ENCODE measurements at regions of chr1 and their contacts with region 1.

Region 1: DNA sequence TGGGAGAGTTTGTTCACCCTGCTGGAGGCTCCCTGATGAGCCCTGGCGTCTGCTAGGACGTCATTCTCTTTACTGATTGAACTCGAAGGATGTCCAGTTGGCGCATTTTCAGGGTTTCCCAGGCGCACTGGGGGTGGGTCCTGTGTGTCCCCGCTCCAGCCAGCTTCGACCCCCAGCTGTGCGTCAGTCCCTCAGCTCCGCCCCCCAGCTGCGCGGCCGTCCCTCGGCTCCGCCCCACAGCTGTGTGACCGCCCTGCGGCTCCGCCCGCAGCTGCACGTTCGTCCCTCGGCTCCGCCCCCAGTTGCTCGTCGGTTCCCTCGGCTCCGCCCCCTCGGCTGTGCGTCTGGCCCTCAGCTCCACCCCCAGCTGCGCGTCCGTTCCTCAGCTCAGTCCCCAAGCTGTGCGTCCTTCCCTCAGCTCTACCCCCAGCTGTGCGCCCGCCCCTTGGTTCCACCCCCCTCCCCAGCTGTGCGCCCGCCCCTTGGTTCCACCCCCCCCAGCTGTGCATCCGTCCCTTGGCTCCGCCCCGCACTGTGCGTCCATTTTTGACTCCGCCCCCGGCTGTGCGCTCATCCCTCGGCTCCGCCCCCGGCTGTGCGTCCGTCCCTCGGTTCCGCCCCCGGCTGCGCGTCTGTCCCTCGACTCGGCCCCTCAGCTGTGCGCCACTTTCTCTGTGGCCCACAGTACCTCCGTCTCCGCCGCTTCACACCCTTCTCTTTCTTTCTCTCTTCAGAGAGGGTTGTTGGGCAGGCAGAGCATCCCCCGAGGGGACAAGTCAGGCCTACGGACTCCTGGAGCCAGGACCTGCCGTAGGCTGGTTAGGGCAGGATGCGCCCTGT is 61.3 kb downstream of the FAAP20 start:
- DNase-seq: peak; percentile 95
- H3K4me3 Mint-ChIP-seq: peak overlapping the region; percentile 73
- H3K27ac Mint-ChIP-seq: peak overlapping the region; percentile 48
- H3K4me1 Mint-ChIP-seq: peaks cover 6% of the 10 kb centered on the region
- H3K27me3 Mint-ChIP-seq: peaks cover 8% of the 10 kb centered on the region

Region 2: GRCh38 chr1:1906185-1907097 is 226.8 kb before region 1 on chr1:
- intact Hi-C with region 1: loop called (anchors 1 kb)
- DNase-seq: peak; percentile 61
- H3K4me3 Mint-ChIP-seq: peak overlapping the region; percentile 68
- H3K27ac Mint-ChIP-seq: peak overlapping the region; percentile 76
- H3K4me1 Mint-ChIP-seq: peaks cover 16% of the 10 kb centered on the region
- H3K27me3 Mint-ChIP-seq: peaks cover 2% of the 10 kb centered on the region

Region 3: DNA sequence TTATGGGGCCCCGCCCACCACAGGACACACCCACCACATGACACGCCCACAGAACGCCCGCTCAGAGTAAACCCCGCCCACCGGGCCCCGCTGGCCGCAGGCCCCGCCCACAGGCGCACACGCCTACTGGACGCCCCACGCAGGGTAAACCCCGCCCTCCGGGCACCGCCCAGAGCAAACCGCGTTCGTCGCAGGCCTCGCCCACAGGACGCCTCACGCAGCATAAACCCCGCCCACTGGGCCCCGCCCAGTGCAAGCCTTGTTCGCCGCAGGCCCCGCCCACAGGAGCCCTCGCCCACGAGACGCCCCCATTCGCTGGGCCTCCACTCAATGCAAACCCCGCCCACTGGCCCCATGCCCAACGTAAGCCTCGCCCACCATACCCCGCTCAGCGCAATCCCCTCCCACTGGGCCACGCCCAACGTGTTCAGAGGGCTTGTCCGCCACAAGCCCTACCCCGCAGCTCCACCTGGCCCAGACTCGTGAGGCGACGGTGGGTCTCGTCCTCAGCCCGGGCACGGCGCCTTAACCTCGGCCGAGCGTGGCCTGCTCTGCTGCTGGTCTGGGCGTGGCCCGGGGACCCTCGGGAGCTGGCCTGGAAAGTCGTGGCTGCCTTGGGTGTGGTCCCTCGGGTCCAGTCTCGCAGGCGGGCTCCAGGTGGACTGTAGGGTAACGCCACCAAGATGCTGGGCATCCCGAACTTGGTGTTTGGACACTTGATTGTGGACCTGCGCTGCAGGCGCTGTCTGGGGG is 213.8 kb before region 1 on chr1:
- intact Hi-C with region 1: loop called (anchors 1 kb)
- DNase-seq: peak; percentile 99
- H3K4me3 Mint-ChIP-seq: peak overlapping the region; percentile 64
- H3K27ac Mint-ChIP-seq: peak overlapping the region; percentile 70
- H3K4me1 Mint-ChIP-seq: no peaks in the 10 kb centered on the region
- H3K27me3 Mint-ChIP-seq: peaks cover 2% of the 10 kb centered on the region

Region 4: GRCh38 chr1:2148691-2149090 is 15.4 kb after region 1 on chr1:
- intact Hi-C with region 1: no loop called
- DNase-seq: peak; percentile 51
- H3K4me3 Mint-ChIP-seq: no peak overlapping the region
- H3K27ac Mint-ChIP-seq: no peak overlapping the region
- H3K4me1 Mint-ChIP-seq: no peaks in the 10 kb centered on the region
- H3K27me3 Mint-ChIP-seq: no peaks in the 10 kb centered on the region

Region 5: GRCh38 chr1:2189459-2190425 is 56.5 kb after region 1 on chr1:
- intact Hi-C with region 1: loop called (anchors 1 kb)
- DNase-seq: peak; percentile 77
- H3K4me3 Mint-ChIP-seq: peak overlapping the region; percentile 58
- H3K27ac Mint-ChIP-seq: no peak overlapping the region
- H3K4me1 Mint-ChIP-seq: peaks cover 4% of the 10 kb centered on the region
- H3K27me3 Mint-ChIP-seq: no peaks in the 10 kb centered on the region

Region 6: GRCh38 chr1:2391041-2391930 is 258.0 kb after region 1 on chr1 and contains the starts of genes MORN1 and RER1:
- intact Hi-C with region 1: loop called (anchors 1 kb)
- DNase-seq: peak; percentile 99
- H3K4me3 Mint-ChIP-seq: peak within 1 kb of the TSS; percentile 88
- H3K27ac Mint-ChIP-seq: peak within 1 kb of the TSS; percentile 82
- H3K4me1 Mint-ChIP-seq: peaks cover 28% of the 10 kb centered on the region
- H3K27me3 Mint-ChIP-seq: no peaks in the 10 kb centered on the region
- total RNA-seq, gene MORN1: 8.4 and 8.6 TPM in 2 replicates
- total RNA-seq, gene RER1: 161 and 177 TPM in 2 replicates

Region 7: GRCh38 chr1:2545759-2546514 is 412.7 kb after region 1 on chr1:
- intact Hi-C with region 1: loop called (anchors 1 kb)
- DNase-seq: peak; percentile 87
- H3K4me3 Mint-ChIP-seq: peak overlapping the region; percentile 91
- H3K27ac Mint-ChIP-seq: peak overlapping the region; percentile 61
- H3K4me1 Mint-ChIP-seq: peaks cover 7% of the 10 kb centered on the region
- H3K27me3 Mint-ChIP-seq: peaks cover 13% of the 10 kb centered on the region

Region 8: DNA sequence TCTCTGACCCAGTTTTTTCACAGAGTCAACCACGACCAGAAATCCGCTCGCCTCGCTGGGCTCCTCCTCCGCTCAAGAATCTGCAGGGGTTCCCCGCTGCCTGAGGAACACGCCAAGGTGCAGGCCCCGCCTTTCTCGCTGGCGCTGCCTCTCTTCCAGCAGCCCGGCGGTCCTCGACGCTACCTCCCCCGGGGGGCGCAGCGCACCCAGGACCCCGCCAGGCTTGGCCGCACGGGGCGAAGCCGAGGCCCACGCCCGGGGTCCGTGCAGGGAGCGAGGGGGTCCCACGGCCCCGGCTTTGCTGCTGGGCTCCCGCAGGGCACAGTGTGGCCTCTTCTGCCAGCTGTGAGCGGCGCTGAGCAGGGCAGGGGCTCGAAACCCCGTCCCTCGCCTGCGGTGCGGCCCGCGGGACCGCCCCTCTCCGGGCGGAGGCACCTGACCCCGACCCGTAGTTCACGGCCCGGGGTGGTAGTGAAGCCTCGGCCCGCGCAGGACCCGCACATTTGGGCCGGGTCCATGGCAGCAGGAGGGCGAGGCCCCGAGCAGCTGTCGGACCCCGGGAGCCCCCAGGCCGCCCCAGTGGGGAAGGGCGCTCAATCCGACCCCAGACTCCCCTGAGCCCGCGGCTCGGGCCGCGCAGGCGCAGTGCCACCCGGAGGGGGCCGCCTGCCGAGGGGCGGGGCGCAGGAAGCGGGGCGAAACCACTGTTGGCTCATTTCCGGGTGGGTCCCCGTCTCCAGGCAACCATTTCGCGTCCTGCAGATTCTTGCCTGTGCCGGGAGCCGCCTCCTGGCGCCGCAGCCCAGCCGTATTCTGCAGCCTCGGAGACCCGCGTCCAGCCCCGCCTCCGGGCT is 509.5 kb after region 1 on chr1:
- intact Hi-C with region 1: loop called (anchors 5 kb)
- DNase-seq: peak; percentile 93
- H3K4me3 Mint-ChIP-seq: peak overlapping the region; percentile 85
- H3K27ac Mint-ChIP-seq: peak overlapping the region; percentile 93
- H3K4me1 Mint-ChIP-seq: no peaks in the 10 kb centered on the region
- H3K27me3 Mint-ChIP-seq: no peaks in the 10 kb centered on the region